IMR-90 (cell line): ENCODE measurements at regions of chr9 and their contacts with region 1.

Region 1: GRCh38 chr9:93682232-93682968 is 106.0 kb downstream of the PHF2 start:
- DNase-seq: peak; percentile 23
- ATAC-seq: peak; percentile 88
- H3K4me3 ChIP-seq: no peak overlapping the region
- H3K27ac ChIP-seq: no peak overlapping the region
- H3K4me1 ChIP-seq: no peaks in the 10 kb centered on the region
- H3K27me3 ChIP-seq: no peaks in the 10 kb centered on the region; the same call in 1 of the 2 replicates
- CTCF ChIP-seq: peak; percentile 77
- POLR2A ChIP-seq: no peak
- RAD21 ChIP-seq: peak; percentile 78

Region 2: GRCh38 chr9:94002316-94003140 is 320.1 kb after region 1 on chr9:
- CTCF ChIA-PET with region 1: interaction called, 4 read pairs
- POLR2A ChIA-PET with region 1: no interaction called
- dilution Hi-C with region 1: no loop called
- in situ Hi-C with region 1: no loop called
- intact Hi-C with region 1: loop called (anchors 1 kb)
- DNase-seq: peak; percentile 50
- ATAC-seq: peak; percentile 75
- H3K4me3 ChIP-seq: no peak overlapping the region
- H3K27ac ChIP-seq: no peak overlapping the region
- H3K4me1 ChIP-seq: no peaks in the 10 kb centered on the region
- H3K27me3 ChIP-seq: 0 out of 2 replicates have a peak, but pooled peaks cover 1% of the 10 kb centered on the region
- CTCF ChIP-seq: peak; percentile 61
- POLR2A ChIP-seq: no peak
- RAD21 ChIP-seq: peak; percentile 46

Region 3: GRCh38 chr9:94178927-94179326 is 496.5 kb after region 1 on chr9:
- CTCF ChIA-PET with region 1: no interaction called
- POLR2A ChIA-PET with region 1: no interaction called
- dilution Hi-C with region 1: no loop called
- in situ Hi-C with region 1: loop called (anchors 25 kb)
- intact Hi-C with region 1: no loop called
- DNase-seq: no peak
- ATAC-seq: 0 out of 2 replicates have a peak, but pooled peaks have one; percentile 13
- H3K4me3 ChIP-seq: no peak overlapping the region
- H3K27ac ChIP-seq: no peak overlapping the region
- H3K4me1 ChIP-seq: peaks cover 10% of the 10 kb centered on the region
- H3K27me3 ChIP-seq: no peaks in the 10 kb centered on the region
- CTCF ChIP-seq: no peak
- POLR2A ChIP-seq: no peak
- RAD21 ChIP-seq: no peak

Region 4: DNA sequence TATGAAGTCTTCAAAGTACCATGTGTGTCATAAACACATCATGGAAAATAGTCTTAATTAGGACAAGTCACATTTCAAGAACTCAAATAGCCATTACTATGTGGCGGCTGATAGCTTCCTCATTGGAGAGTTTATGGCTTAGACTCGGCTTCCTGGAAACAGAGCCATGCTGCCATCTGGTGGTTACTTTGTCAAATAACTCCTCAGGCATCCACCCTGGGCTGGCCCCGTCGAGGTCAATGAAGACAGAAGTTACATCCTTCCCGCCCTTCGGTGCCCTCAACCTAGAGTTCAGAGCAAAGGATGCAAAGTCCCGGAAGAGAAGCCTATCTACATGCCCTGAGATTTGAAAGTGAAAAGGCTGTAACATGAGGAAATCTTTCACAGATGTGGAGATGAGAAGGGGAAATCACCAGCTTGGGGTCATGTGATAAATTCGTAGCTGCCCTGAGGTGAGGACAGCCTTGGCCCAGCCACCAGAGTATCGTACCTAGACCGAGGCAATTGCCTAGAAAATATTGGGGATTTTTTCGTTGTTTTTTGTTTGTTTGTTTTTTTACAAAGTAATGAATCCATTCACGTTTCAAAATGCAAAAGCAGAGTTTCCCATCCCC is 531.2 kb after region 1 on chr9:
- CTCF ChIA-PET with region 1: no interaction called
- POLR2A ChIA-PET with region 1: no interaction called
- dilution Hi-C with region 1: no loop called
- in situ Hi-C with region 1: no loop called
- intact Hi-C with region 1: loop called (anchors 1 kb)
- DNase-seq: peak; percentile 72
- ATAC-seq: peak; percentile 98
- H3K4me3 ChIP-seq: no peak overlapping the region
- H3K27ac ChIP-seq: no peak overlapping the region
- H3K4me1 ChIP-seq: peaks cover 2% of the 10 kb centered on the region
- H3K27me3 ChIP-seq: peaks cover 2% of the 10 kb centered on the region; the same call in 1 of the 2 replicates
- CTCF ChIP-seq: peak; percentile 96
- POLR2A ChIP-seq: peak; percentile 54; the same call in 1 of the 2 replicates
- RAD21 ChIP-seq: peak; percentile 99